Activated naive CD4-positive, alpha-beta T cell treated with anti-CD3 and anti-CD28 coated beads for 36 hours (primary cell): ENCODE measurements at regions of chr1 and their contacts with region 1.

Region 1: GRCh38 chr1:58783993-58784757 is at the start of gene JUN:
- DNase-seq: peak; percentile 99
- H3K4me3 Mint-ChIP-seq: peak within 1 kb of the TSS; percentile 97
- H3K27ac Mint-ChIP-seq: peak within 1 kb of the TSS; percentile 99
- H3K4me1 Mint-ChIP-seq: peaks cover 16% of the 10 kb centered on the region
- H3K27me3 Mint-ChIP-seq: no peaks in the 10 kb centered on the region
- total RNA-seq, gene JUN: 24.2 to 25.9 TPM

Region 2: GRCh38 chr1:58739856-58740466 is 44.2 kb before region 1 on chr1:
- CTCF ChIA-PET with region 1: interaction called, 4 read pairs
- intact Hi-C with region 1: loop called (anchors 5 kb)
- DNase-seq: peak; percentile 15
- H3K4me3 Mint-ChIP-seq: no peak overlapping the region
- H3K27ac Mint-ChIP-seq: no peak overlapping the region
- H3K4me1 Mint-ChIP-seq: no peaks in the 10 kb centered on the region
- H3K27me3 Mint-ChIP-seq: no peaks in the 10 kb centered on the region

Region 3: GRCh38 chr1:58857680-58858673 is 73.8 kb after region 1 on chr1:
- CTCF ChIA-PET with region 1: interaction called, 5 read pairs
- intact Hi-C with region 1: loop called (anchors 1 kb)
- DNase-seq: peak; percentile 60
- H3K4me3 Mint-ChIP-seq: no peak overlapping the region
- H3K27ac Mint-ChIP-seq: peak overlapping the region; percentile 82
- H3K4me1 Mint-ChIP-seq: peaks cover 44% of the 10 kb centered on the region
- H3K27me3 Mint-ChIP-seq: no peaks in the 10 kb centered on the region

Region 4: DNA sequence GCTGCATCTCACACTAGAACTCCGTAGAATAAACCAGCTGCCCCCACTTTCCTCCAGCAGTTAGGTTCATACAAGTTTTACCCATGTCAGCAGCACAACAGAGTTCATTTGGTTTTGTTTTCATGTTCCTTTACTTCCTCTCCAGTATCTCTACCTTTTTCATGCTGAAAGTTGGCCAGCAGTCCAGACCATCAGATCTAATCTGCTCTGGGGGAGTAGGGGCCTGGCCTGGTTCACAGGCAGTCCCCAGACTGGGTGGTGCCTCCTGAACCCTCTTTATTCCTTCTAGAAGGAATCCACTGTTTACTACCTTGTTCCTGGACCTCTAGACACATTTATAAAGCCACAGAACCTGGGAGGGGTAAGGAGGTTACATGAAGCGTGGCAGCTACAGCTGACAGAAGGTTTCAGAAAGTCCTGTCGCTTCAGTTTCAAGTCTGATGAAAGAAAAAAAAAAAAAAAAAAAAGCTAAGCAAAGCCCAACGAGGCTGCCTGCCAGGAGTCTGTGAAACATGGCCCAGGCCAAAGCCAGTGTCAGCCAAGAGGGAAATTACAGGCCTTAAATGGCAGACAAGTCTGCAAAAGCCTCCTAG is 184.3 kb after region 1 on chr1:
- CTCF ChIA-PET with region 1: no interaction called
- intact Hi-C with region 1: loop called (anchors 1 kb)
- DNase-seq: peak; percentile 43
- H3K4me3 Mint-ChIP-seq: no peak overlapping the region
- H3K27ac Mint-ChIP-seq: peak overlapping the region; percentile 86
- H3K4me1 Mint-ChIP-seq: peaks cover 27% of the 10 kb centered on the region
- H3K27me3 Mint-ChIP-seq: no peaks in the 10 kb centered on the region

Region 5: DNA sequence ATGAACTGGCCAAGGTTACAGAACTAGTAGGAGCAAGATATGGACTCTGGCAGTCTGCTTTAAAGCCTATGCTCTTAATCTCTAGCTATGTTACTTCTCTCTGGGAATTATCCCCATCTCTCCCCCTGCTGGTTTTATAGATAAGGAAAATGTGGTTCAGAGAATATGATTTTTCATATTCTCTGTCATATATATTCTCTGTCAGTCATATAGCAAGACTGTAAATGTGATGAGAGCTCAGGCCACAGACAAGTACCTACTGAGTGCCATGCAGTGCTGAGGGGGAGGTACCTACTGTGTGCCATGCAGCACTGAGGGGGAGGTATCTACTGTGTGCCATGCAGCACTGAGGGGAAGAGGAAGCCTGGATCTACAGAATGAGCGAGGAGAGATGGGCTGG is 292.4 kb after region 1 on chr1:
- CTCF ChIA-PET with region 1: no interaction called
- intact Hi-C with region 1: loop called (anchors 1 kb)
- DNase-seq: no peak
- H3K4me3 Mint-ChIP-seq: no peak overlapping the region
- H3K27ac Mint-ChIP-seq: no peak overlapping the region
- H3K4me1 Mint-ChIP-seq: peaks cover 23% of the 10 kb centered on the region
- H3K27me3 Mint-ChIP-seq: no peaks in the 10 kb centered on the region

Region 6: GRCh38 chr1:59414406-59415133 is 630.4 kb after region 1 on chr1:
- CTCF ChIA-PET with region 1: no interaction called
- intact Hi-C with region 1: no loop called
- DNase-seq: no peak
- H3K4me3 Mint-ChIP-seq: no peak overlapping the region
- H3K27ac Mint-ChIP-seq: no peak overlapping the region
- H3K4me1 Mint-ChIP-seq: no peaks in the 10 kb centered on the region
- H3K27me3 Mint-ChIP-seq: no peaks in the 10 kb centered on the region

Region 7: GRCh38 chr1:59568158-59568935 is 784.2 kb after region 1 on chr1:
- CTCF ChIA-PET with region 1: no interaction called
- intact Hi-C with region 1: loop called (anchors 5 kb)
- DNase-seq: no peak
- H3K4me3 Mint-ChIP-seq: no peak overlapping the region
- H3K27ac Mint-ChIP-seq: no peak overlapping the region
- H3K4me1 Mint-ChIP-seq: peaks cover 17% of the 10 kb centered on the region
- H3K27me3 Mint-ChIP-seq: no peaks in the 10 kb centered on the region